Activated T-helper 1 cell treated with anti-CD3 and anti-CD28 coated beads, Interleukin-12 subunit alpha, Interleukin-12 subunit beta, Interleukin-2, Interleukin-4 antibody, amounts not matched to agents 30 ng/mL and 10 ng/mL and 1 ng/mL, durations not matched to agents 14 hours and 24 hours and 36 hours (primary cell): ENCODE measurements at regions of chr3 and their contacts with region 1.

Region 1: GRCh38 chr3:177124882-177125281 is 72.4 kb downstream of the TBL1XR1 start:
- DNase-seq: no peak
- H3K4me3 Mint-ChIP-seq: no peak overlapping the region
- H3K27ac Mint-ChIP-seq: peak overlapping the region; percentile 14
- H3K4me1 Mint-ChIP-seq: peaks cover 65% of the 10 kb centered on the region
- H3K27me3 Mint-ChIP-seq: no peaks in the 10 kb centered on the region

Region 2: GRCh38 chr3:177137774-177138705 is 13.2 kb after region 1 on chr3:
- intact Hi-C with region 1: loop called (anchors 2 kb)
- DNase-seq: no peak
- H3K4me3 Mint-ChIP-seq: no peak overlapping the region
- H3K27ac Mint-ChIP-seq: peak overlapping the region; percentile 56
- H3K4me1 Mint-ChIP-seq: peaks cover 59% of the 10 kb centered on the region
- H3K27me3 Mint-ChIP-seq: no peaks in the 10 kb centered on the region

Region 3: DNA sequence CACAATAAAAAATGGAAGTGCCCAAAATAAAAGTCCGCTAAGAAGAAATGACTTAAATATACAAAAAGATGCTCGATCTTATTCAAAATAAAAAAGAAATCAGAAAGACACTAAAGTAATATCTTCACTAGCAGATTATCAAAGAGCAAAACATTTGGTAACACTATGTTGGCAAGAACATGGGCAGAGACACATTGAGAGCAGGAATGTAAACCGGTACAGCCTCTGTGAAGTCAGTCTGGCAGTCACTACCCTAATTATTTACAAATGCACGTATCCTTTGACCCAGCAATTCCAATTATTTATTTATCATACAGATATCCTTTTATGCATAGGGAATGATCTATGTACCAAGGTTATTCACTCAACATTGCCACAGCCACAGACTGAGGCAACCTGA is 37.9 kb after region 1 on chr3:
- intact Hi-C with region 1: loop called (anchors 5 kb)
- DNase-seq: no peak
- H3K4me3 Mint-ChIP-seq: no peak overlapping the region
- H3K27ac Mint-ChIP-seq: no peak overlapping the region
- H3K4me1 Mint-ChIP-seq: peaks cover 47% of the 10 kb centered on the region
- H3K27me3 Mint-ChIP-seq: no peaks in the 10 kb centered on the region